ENCODE measurements at regions of chr14 and their contacts with region 1.

Region 1: DNA sequence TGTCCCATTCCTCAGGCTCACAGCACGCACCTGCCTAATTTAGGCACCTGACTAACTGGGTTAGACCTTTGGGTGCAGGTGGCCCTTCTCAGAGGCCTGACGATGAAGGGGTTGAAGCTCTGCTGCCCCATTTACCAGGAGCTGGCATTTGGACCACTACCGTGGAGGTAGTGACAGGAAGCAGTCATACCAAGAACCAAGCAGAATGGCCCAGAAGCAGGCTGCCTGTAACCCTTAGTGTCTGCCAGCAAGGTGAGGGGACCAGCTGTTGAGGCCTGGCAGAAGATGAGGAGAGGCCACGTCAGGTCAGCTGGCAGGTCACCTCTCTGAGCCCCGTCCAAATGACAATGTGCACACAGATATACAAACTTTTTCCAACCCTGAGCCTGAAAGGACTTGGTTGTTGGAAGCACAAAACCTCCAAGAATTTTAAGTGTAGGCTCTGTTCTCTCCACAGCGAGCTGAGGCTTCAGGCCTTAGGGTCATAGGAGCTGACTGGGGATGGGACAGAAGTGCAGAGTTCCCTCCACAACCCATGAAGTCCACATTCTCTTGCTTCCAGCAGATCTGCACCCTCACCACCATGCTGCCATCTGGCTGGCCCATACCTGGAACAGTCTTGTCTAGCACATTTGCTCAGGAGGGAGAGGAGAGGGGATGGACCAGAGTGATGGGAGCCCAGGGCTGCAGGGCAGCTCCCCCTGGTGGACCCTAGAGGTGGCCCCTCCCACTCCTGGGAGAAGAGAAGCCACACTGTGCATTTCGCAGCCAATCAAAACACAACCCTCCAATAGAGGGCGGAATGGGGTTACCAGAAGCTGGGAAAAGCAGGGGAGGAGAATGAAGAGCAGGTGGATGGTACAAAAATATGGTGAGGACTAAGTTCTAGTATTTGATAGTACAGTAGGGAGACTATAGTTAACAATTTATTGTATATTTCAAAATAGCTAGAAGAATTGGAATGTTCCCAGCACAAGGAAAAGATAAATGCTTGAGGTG is 23.3 kb downstream of the VASH1 start:
- DNase-seq: peak; percentile 81
- ATAC-seq: peak; percentile 85
- H3K4me3 Mint-ChIP-seq: no peak overlapping the region
- H3K27ac Mint-ChIP-seq: no peak overlapping the region
- H3K4me1 Mint-ChIP-seq: peaks cover 32% of the 10 kb centered on the region
- H3K27me3 Mint-ChIP-seq: no peaks in the 10 kb centered on the region

Region 2: GRCh38 chr14:76456200-76456599 is 328.4 kb before region 1 on chr14:
- CTCF ChIA-PET with region 1: no interaction called
- POLR2A ChIA-PET with region 1: no interaction called
- intact Hi-C with region 1: no loop called
- DNase-seq: peak; percentile 65
- ATAC-seq: peak; percentile 36
- H3K4me3 Mint-ChIP-seq: no peak overlapping the region
- H3K27ac Mint-ChIP-seq: no peak overlapping the region
- H3K4me1 Mint-ChIP-seq: no peaks in the 10 kb centered on the region
- H3K27me3 Mint-ChIP-seq: peaks cover 12% of the 10 kb centered on the region

Region 3: GRCh38 chr14:76695263-76695920 is 89.2 kb before region 1 on chr14:
- CTCF ChIA-PET with region 1: no interaction called
- POLR2A ChIA-PET with region 1: no interaction called
- intact Hi-C with region 1: no loop called
- DNase-seq: no peak
- ATAC-seq: no peak
- H3K4me3 Mint-ChIP-seq: no peak overlapping the region
- H3K27ac Mint-ChIP-seq: no peak overlapping the region
- H3K4me1 Mint-ChIP-seq: no peaks in the 10 kb centered on the region
- H3K27me3 Mint-ChIP-seq: no peaks in the 10 kb centered on the region

Region 4: GRCh38 chr14:76767681-76768656 is 16.6 kb before region 1 on chr14:
- CTCF ChIA-PET with region 1: interaction called, 23 read pairs
- POLR2A ChIA-PET with region 1: no interaction called
- intact Hi-C with region 1: no loop called
- DNase-seq: peak; percentile 86
- ATAC-seq: peak; percentile 100
- H3K4me3 Mint-ChIP-seq: peak overlapping the region; percentile 23
- H3K27ac Mint-ChIP-seq: peak overlapping the region; percentile 80
- H3K4me1 Mint-ChIP-seq: peaks cover 17% of the 10 kb centered on the region
- H3K27me3 Mint-ChIP-seq: peaks cover 2% of the 10 kb centered on the region

Region 5: GRCh38 chr14:76947078-76947837 is 162.7 kb after region 1 on chr14:
- CTCF ChIA-PET with region 1: no interaction called
- POLR2A ChIA-PET with region 1: no interaction called
- intact Hi-C with region 1: no loop called
- DNase-seq: peak; percentile 92
- ATAC-seq: peak; percentile 81
- H3K4me3 Mint-ChIP-seq: peak overlapping the region; percentile 3
- H3K27ac Mint-ChIP-seq: peak overlapping the region; percentile 81
- H3K4me1 Mint-ChIP-seq: peaks cover 56% of the 10 kb centered on the region
- H3K27me3 Mint-ChIP-seq: no peaks in the 10 kb centered on the region